CD8-positive, alpha-beta T cell (primary cell): ENCODE measurements at regions of chr11 and their contacts with region 1.

Region 1: GRCh38 chr11:126310228-126310991 is 6.5 kb downstream of the DCPS start:
- DNase-seq: peak in 8 of 9 experiments; percentile 37 to 77 (median 64)
- ATAC-seq: peak; percentile 75
- H3K4me3 ChIP-seq: no peak overlapping the region
- H3K4me3 Mint-ChIP-seq: no peak overlapping the region
- H3K27ac ChIP-seq: no peak overlapping the region
- H3K27ac Mint-ChIP-seq: no peak overlapping the region
- H3K4me1 ChIP-seq: peaks cover 5% of the 10 kb centered on the region
- H3K4me1 Mint-ChIP-seq: peaks cover 30% of the 10 kb centered on the region
- H3K27me3 ChIP-seq: no peaks in the 10 kb centered on the region
- H3K27me3 Mint-ChIP-seq: no peaks in the 10 kb centered on the region
- CTCF ChIP-seq: peak; percentile 60

Region 2: DNA sequence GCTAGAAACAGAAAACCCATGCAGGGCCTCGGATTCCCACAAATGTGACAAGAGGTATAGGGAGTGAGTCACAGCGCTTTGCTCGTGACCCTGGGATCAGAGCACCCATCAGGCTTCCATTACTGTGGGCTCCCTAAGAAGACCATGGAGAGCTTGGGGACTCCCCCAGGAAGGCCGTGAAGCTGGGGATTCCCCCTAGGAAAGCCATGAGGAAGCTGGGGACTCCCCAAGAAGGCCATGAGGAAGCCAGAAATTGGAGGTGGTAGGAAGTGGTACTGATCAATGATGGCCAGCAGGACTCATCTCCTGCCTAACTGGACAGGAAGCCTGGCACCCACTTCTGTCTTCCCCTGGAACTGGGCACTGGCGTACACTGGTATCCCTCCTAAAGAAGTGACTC is 16.7 kb before region 1 on chr11:
- CTCF ChIA-PET with region 1: interaction called, 10 read pairs
- POLR2A ChIA-PET with region 1: interaction called, 4 read pairs
- intact Hi-C with region 1: no loop called
- DNase-seq: no peak
- ATAC-seq: no peak
- H3K4me3 ChIP-seq: no peak overlapping the region
- H3K4me3 Mint-ChIP-seq: no peak overlapping the region
- H3K27ac ChIP-seq: no peak overlapping the region
- H3K27ac Mint-ChIP-seq: no peak overlapping the region
- H3K4me1 ChIP-seq: no peaks in the 10 kb centered on the region
- H3K4me1 Mint-ChIP-seq: peaks cover 8% of the 10 kb centered on the region
- H3K27me3 ChIP-seq: no peaks in the 10 kb centered on the region
- H3K27me3 Mint-ChIP-seq: no peaks in the 10 kb centered on the region
- CTCF ChIP-seq: no peak

Region 3: DNA sequence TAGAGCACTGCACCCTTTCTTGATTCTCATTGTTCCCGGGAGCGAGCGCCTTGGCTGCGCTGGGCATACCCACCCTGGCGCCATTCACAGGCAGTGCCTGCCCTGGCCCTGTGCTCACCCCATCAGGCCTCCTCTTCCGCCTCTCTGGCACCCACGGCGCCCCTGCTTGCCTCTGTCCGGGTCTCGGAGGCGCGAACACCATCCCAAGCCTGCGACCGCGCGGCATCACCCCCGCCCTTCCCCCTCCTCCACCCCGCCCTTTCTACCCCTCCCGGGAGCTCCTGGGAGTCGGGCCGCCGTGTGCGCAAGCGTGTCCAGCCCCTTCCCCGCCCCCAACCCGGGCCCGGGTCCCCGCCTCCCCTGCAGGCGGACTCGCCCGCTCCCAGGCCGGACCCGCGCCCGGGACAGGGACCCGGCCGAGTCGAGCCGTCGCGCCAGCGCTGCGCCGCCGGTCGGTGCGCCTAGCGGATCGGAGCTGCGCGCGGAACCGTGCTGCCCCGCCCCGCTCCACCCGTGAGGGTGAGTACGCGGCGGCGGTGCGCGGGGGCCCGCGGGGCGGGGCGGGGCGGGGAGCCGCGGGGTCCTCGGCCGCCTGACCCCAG is 45.0 kb after region 1 on chr11 and contains the start of gene ST3GAL4:
- CTCF ChIA-PET with region 1: interaction called, 8 read pairs
- POLR2A ChIA-PET with region 1: interaction called, 3 read pairs
- intact Hi-C with region 1: loop called in 1 of 2 experiments (anchors 5 kb)
- DNase-seq: peak in 8 of 9 experiments; percentile 47 to 78 (median 61)
- ATAC-seq: peak; percentile 78
- H3K4me3 ChIP-seq: peak within 1 kb of the TSS; percentile 74 to 81
- H3K4me3 Mint-ChIP-seq: peak within 1 kb of the TSS; percentile 87
- H3K27ac ChIP-seq: peak within 1 kb of the TSS; percentile 37 to 70
- H3K27ac Mint-ChIP-seq: peak within 1 kb of the TSS; percentile 64
- H3K4me1 ChIP-seq: peaks cover 16% of the 10 kb centered on the region
- H3K4me1 Mint-ChIP-seq: peaks cover 25% of the 10 kb centered on the region
- H3K27me3 ChIP-seq: no peaks in the 10 kb centered on the region
- H3K27me3 Mint-ChIP-seq: no peaks in the 10 kb centered on the region
- CTCF ChIP-seq: no peak
- total RNA-seq, gene ST3GAL4: 2.8 to 3.7 TPM

Region 4: DNA sequence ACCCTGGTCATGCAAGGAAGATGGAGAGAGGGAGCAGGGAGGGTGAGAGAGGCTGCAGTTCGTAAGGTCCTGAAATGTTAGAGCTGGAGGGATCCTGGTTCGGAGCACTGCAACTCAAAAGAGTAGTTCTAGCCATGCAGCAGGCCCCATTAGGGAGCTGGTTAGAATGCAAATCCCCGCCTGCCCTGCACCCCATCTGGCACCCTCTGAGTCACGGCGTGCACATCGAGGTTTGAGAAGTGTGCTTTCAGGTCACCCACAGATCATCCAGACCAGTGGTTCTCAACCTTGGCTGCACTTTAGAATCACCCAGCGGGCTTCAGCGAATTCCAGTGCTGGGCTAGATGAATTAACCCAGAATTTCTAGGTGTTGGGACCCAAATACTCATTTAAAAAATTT is 93.2 kb after region 1 on chr11:
- CTCF ChIA-PET with region 1: no interaction called
- POLR2A ChIA-PET with region 1: no interaction called
- intact Hi-C with region 1: no loop called
- DNase-seq: no peak
- ATAC-seq: no peak
- H3K4me3 ChIP-seq: no peak overlapping the region
- H3K4me3 Mint-ChIP-seq: no peak overlapping the region
- H3K27ac ChIP-seq: no peak overlapping the region
- H3K27ac Mint-ChIP-seq: no peak overlapping the region
- H3K4me1 ChIP-seq: no peaks in the 10 kb centered on the region
- H3K4me1 Mint-ChIP-seq: no peaks in the 10 kb centered on the region
- H3K27me3 ChIP-seq: no peaks in the 10 kb centered on the region
- H3K27me3 Mint-ChIP-seq: no peaks in the 10 kb centered on the region
- CTCF ChIP-seq: no peak

Region 5: GRCh38 chr11:126416542-126417090 is 106.2 kb after region 1 on chr11:
- CTCF ChIA-PET with region 1: interaction called, 4 read pairs
- POLR2A ChIA-PET with region 1: no interaction called
- intact Hi-C with region 1: loop called in 1 of 2 experiments (anchors 10 kb)
- DNase-seq: peak; percentile 20 to 82 (median 67)
- ATAC-seq: peak; percentile 98
- H3K4me3 ChIP-seq: peak overlapping the region; percentile 40 to 49
- H3K4me3 Mint-ChIP-seq: peak overlapping the region; percentile 71
- H3K27ac ChIP-seq: no peak overlapping the region
- H3K27ac Mint-ChIP-seq: no peak overlapping the region
- H3K4me1 ChIP-seq: peaks cover 7% of the 10 kb centered on the region
- H3K4me1 Mint-ChIP-seq: peaks cover 12% of the 10 kb centered on the region
- H3K27me3 ChIP-seq: no peaks in the 10 kb centered on the region
- H3K27me3 Mint-ChIP-seq: peaks cover 2% of the 10 kb centered on the region
- CTCF ChIP-seq: no peak